Right ventricle myocardium inferior (tissue), 1 donor: ENCODE measurements at regions of chr7 and their contacts with region 1.

Region 1: DNA sequence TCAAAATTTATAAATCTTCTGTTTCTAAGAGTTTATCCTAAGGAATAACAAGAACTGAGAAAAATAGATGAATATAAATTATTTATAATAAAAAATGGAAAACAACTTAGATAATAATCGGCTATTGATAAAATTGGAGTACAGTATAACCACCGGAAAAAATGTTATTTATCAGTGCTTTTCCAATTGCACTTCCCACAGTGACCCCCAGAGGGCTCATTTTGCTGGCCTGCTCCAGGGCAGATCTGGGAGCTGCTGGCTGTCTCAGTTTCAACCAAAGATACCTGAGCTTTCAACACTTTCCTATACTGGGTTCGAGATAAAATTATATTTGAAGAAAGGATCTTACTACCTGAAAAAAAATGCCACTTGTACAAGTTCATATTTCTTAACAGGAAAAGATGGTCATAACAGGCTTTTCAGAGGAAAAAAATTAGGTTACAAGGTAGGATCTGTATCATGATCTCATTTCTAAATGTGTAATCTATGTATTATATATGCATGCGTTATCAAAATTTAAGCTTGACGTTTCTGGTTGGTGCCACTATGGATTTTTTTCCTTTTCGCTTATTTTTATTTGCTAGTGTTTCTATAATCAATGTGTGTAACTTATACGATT is 165.7 kb downstream of the NPSR1 start:
- DNase-seq: no peak
- ATAC-seq: no peak

Region 2: GRCh38 chr7:34902182-34902581 is 78.4 kb after region 1 on chr7:
- intact Hi-C with region 1: no loop called
- DNase-seq: no peak
- ATAC-seq: no peak

Region 3: DNA sequence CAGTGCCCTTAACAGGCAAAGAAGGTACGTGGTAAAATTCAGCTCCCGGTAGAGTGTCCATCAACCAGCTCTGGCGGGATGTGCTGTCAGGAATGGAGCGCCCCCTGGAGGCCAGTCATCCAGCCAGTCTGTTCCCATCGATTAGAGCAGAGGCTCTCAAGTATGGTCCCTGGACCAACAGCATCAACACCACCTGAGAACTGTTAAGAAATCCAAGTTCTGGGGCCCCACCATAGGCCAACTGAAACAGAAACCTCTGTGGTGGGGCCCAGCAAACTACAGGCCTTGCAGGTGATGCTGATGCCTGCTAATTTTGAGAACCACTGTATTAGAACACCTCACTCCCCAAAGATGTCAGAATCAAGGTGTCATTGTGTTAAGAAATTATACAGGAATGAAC is 104.3 kb after region 1 on chr7:
- intact Hi-C with region 1: loop called (anchors 10 kb)
- DNase-seq: no peak
- ATAC-seq: no peak